ENCODE measurements at regions of chr10 and their contacts with region 1.

Region 1: DNA sequence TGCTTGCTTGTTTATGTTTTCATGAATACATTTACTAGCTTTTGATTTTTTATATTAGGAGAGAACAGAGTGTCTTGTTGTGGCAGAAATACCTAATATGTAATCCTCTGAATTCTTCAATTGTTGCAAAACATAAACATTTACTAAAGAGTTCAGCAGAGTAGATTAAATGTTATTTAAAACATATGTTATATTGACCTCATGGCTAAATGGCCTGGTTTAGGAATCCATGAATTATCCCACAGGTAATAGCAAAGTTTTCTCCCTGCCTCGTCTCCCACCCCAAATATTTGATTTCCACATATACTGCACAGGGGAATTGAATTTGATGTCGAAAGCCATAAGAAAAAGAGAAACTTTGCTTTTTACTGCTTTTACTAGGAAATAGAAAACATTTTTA is 111.8 kb downstream of the ADK start:
- DNase-seq: no peak
- H3K4me3 ChIP-seq: no peak overlapping the region
- H3K27ac ChIP-seq: no peak overlapping the region
- H3K4me1 ChIP-seq: no peaks in the 10 kb centered on the region
- H3K27me3 ChIP-seq: no peaks in the 10 kb centered on the region
- CTCF ChIP-seq: no peak
- POLR2A ChIP-seq: no peak

Region 2: GRCh38 chr10:72831696-72832355 is 1431.0 kb before region 1 on chr10:
- intact Hi-C with region 1: no loop called
- DNase-seq: no peak
- H3K4me3 ChIP-seq: no peak overlapping the region
- H3K27ac ChIP-seq: no peak overlapping the region
- H3K4me1 ChIP-seq: no peaks in the 10 kb centered on the region
- H3K27me3 ChIP-seq: no peaks in the 10 kb centered on the region
- CTCF ChIP-seq: no peak
- POLR2A ChIP-seq: no peak

Region 3: DNA sequence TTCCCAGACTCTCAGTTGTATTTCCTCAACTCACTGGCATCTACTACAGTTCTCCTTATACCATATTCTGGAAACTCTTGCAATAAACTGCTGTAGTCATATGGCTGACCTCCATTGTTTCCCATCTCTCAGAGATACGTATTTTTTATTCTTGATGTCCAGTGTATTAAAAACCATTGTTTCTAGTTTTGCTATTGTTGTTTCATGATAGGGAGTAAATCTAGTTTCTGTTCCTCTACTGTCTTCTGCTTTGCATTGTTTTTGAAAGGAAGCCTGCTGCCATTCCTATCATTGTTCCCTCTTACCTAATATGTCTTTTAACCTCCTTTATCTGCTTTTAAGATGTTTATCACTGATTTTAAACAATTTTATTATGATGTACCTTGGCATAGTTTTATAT is 143.2 kb after region 1 on chr10:
- intact Hi-C with region 1: no loop called
- DNase-seq: no peak
- H3K4me3 ChIP-seq: no peak overlapping the region
- H3K27ac ChIP-seq: no peak overlapping the region
- H3K4me1 ChIP-seq: no peaks in the 10 kb centered on the region
- H3K27me3 ChIP-seq: no peaks in the 10 kb centered on the region
- CTCF ChIP-seq: no peak
- POLR2A ChIP-seq: no peak

Region 4: DNA sequence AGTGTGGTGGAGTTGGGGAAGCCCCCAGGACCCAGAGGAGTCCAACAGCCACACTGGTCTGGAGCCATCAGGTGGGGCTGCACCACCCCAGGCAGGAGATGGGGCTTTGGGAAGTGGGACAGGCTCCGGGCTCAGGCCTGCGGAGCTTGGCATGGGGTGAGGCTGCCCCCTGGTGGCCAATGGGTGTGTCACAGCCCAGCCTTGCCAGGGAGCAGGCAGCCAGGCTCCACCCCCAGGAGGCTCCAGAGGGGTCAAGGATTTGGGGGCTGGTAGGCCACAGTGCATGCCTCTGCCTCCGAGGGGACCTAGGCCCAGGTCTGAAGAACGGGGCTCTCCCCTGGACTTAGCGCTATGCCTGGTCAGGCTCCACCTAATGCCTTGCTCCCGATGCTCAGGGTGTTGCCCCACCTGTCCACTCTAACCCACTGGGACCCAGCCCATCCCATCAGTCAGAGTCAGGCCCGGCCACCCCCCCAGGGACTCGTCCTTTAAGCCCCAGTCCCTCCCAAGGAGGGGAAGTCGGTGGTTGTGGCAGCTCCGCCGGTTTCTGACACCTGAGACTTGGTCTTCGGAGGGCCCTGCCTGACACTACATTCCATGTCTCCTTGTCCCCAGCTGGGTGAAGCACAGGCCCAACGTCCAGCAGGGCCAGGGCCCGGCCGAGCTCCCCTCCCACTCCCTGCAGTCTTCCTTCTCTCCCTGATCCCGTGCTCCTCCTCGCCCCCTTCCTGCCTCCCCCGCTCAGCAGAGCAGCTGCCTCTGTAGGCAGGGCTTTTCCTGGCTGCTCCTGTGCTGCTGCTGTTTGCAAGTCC is 837.3 kb after region 1 on chr10:
- intact Hi-C with region 1: loop called (anchors 5 kb)
- DNase-seq: peak; percentile 66
- H3K4me3 ChIP-seq: no peak overlapping the region
- H3K27ac ChIP-seq: no peak overlapping the region
- H3K4me1 ChIP-seq: no peaks in the 10 kb centered on the region
- H3K27me3 ChIP-seq: no peaks in the 10 kb centered on the region
- CTCF ChIP-seq: peak; percentile 94 to 98 (median 96)
- POLR2A ChIP-seq: no peak

Region 5: DNA sequence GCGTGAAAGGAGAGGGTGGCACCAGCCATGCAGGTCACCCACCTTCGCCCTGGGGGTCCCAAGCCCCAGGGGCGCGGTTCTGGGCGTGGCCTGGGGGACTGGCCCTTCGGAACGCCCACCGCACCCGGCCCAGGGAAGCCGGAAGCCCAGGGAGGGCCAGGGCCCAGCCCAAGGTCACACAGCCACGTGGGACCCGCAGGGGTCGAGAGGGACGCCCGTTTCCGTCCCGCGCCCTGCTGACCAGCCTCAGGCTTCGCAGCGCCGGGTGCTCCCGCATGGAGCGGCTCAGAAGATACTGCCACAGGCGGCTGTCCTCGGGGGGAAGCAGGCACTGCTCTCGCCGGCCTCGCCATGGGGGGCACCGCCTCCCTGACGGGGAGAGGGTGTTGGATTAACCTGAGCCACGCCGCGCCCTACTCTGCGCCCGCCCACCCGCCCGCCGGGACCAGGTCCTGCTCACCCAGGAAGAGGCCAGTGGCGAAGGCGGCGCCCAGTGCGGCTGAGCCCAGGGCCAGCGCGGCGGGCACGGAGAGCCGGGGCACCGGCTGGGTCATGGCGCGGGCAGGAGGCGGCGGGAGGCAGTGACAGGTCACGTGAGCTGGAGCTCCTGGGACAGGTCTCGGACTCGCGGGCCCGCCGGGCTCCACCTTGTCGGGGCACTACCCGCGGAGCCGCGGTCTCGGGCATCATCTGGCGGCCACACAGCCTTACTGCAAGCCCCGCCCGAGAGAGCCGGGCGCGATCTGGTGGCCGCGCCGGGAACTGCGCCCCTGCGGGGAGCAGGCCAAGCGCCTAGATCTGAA is 972.7 kb after region 1 on chr10 and contains the start of gene COMTD1:
- intact Hi-C with region 1: loop called (anchors 10 kb)
- DNase-seq: peak; percentile 95
- H3K4me3 ChIP-seq: peak within 1 kb of the TSS; percentile 68 to 70
- H3K27ac ChIP-seq: peak within 1 kb of the TSS; percentile 79 to 81
- H3K4me1 ChIP-seq: peaks cover 5% of the 10 kb centered on the region
- H3K27me3 ChIP-seq: no peaks in the 10 kb centered on the region
- CTCF ChIP-seq: peak; percentile 100
- POLR2A ChIP-seq: peak; percentile 29
- total RNA-seq, gene COMTD1: 26.8 to 49.3 TPM

Measured in prostate gland (tissue), 2 donors.